Naive thymus-derived CD4-positive, alpha-beta T cell (primary cell): ENCODE measurements at regions of chr6 and their contacts with region 1.

Region 1: DNA sequence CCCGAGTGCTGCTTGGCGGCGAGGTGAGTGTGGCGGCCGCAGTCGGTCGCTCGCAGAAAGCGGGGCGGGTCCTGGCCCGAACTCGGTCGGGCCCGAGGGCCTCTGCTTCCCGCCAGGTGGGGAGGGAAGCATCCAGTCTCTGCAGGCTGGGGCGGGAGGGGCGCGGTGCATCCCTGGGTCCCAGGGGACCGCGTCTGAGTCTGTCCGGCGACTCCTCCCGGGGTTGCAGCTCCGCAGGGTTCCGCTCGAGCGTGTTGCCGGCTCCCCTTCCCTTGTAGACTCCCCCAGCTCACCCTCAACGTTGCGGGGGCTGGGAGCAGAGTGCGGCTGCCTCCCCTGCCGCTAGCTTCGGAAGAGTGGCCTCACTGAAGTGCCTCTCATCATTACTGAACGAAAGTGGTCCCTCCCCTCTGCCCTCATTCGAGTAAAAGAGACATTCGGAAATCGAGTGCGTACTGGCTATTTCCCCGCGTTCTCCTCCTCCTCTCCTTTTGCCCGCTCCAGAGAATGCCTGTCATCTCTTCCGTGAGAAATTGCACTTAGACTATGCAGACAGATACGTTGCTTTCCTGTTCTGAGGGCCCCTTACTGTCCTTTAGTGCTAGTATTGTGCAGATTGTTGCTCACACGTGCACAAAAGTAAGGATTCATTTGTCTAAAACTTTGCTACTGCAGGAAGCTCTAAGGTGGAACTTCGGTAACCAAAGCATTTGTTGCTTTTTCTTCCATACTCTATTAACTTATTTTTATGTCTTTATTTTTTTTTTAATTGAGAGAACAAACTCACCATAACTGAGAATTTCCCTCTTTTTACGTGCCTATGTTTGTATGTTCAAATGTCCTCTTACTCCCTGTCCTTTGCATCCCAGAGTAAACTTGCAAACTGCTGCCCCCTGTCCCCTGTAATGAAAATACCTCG is 751 bp downstream of the MAP3K4 start:
- DNase-seq: peak in 7 of 9 donors; percentile 17 to 65 (median 47)
- ATAC-seq: peak; percentile 63
- H3K4me3 ChIP-seq: peak overlapping the region; percentile 94
- H3K4me3 Mint-ChIP-seq: peak overlapping the region; percentile 90 to 99 (median 93)
- H3K27ac ChIP-seq: peak overlapping the region; percentile 76
- H3K27ac Mint-ChIP-seq: peak overlapping the region; percentile 83 to 97 (median 93)
- H3K4me1 ChIP-seq: peaks cover 9 to 14% of the 10 kb centered on the region in 2 donors
- H3K4me1 Mint-ChIP-seq: peaks cover 19 to 60% (median 45%) of the 10 kb centered on the region in 7 donors
- H3K27me3 ChIP-seq: no peaks in the 10 kb centered on the region
- H3K27me3 Mint-ChIP-seq: peaks cover 0 to 30% (median 0%) of the 10 kb centered on the region in 5 donors

Region 2: DNA sequence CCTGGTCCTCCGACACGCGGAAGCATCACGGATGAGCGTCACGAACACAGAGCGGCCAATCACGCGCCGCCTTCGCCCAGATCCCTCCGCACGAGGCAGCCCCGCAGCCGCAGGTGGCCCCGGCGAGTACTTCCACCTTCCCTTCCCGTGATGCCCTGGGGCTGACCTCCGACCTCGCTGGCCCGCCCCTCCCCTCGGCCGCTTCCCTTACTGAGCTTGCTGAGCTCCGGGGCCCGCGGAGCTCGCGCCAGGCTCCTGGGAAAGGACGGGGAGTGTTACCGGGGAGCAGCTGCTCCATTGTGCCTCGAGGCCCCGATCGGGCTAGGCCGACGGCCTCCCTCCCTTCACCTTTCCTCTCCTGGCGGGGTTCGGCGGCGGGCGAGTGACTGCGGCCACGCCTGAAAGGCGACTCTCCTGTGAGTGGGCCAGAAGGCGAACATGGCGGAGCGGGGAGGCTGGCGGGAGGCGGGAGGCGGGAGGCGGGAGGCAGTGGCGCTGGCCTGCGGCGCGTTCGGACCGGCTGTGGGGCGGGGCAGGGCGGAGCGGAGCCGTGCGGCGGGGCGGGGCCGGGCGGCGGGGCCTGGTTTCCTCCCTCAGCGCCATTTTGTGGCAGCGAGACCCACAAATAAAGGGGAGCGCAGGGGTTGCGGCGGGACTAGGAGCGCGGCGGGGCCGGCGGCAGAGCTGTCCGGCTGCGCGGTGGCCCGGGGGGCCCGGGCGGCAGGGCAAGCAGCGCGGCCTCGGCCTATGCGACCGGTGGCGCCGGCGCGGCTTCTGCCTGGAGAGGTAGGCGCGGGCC is 1265.2 kb before region 1 on chr6 and contains the start of gene WTAP:
- CTCF ChIA-PET with region 1: no interaction called
- POLR2A ChIA-PET with region 1: no interaction called
- intact Hi-C with region 1: loop called in 1 of 2 experiments (anchors 2 kb)
- DNase-seq: peak; percentile 83 to 97 (median 97)
- ATAC-seq: peak; percentile 93
- H3K4me3 ChIP-seq: peak within 1 kb of the TSS; percentile 89
- H3K4me3 Mint-ChIP-seq: peak within 1 kb of the TSS; percentile 87 to 97 (median 95)
- H3K27ac ChIP-seq: peak within 1 kb of the TSS; percentile 91
- H3K27ac Mint-ChIP-seq: peak within 1 kb of the TSS; percentile 95 to 100 (median 99)
- H3K4me1 ChIP-seq: peaks cover 33 to 34% of the 10 kb centered on the region in 2 donors
- H3K4me1 Mint-ChIP-seq: peaks cover 34 to 79% (median 67%) of the 10 kb centered on the region in 7 donors
- H3K27me3 ChIP-seq: no peaks in the 10 kb centered on the region
- H3K27me3 Mint-ChIP-seq: peaks cover 0 to 6% (median 0%) of the 10 kb centered on the region in 5 donors
- total RNA-seq, gene WTAP: 117 to 152 (median 141) TPM

Region 3: DNA sequence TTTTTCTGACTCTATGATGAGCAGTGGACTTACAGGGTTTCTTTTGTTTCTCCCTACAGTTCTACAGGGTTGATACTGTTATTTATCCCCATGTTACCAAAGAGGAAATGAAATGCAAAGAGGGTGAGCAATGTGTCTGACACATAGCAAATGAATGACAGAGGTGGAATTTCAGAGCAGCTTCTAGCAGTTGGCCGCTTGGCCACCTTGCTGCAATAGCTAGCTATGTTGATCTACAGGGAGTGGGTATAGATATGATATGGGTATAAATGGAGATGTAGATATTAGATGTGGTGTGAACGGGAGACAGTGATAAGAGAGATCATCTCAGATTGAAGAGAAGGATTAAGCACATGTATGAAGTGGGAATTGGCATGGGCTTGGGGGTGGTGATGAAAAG is 655.0 kb before region 1 on chr6:
- CTCF ChIA-PET with region 1: no interaction called
- POLR2A ChIA-PET with region 1: no interaction called
- intact Hi-C with region 1: no loop called
- DNase-seq: no peak
- ATAC-seq: no peak
- H3K4me3 ChIP-seq: no peak overlapping the region
- H3K4me3 Mint-ChIP-seq: no peak overlapping the region
- H3K27ac ChIP-seq: no peak overlapping the region
- H3K27ac Mint-ChIP-seq: no peak overlapping the region
- H3K4me1 ChIP-seq: no peaks in the 10 kb centered on the region
- H3K4me1 Mint-ChIP-seq: peaks cover 0 to 3% (median 0%) of the 10 kb centered on the region in 7 donors
- H3K27me3 ChIP-seq: no peaks in the 10 kb centered on the region
- H3K27me3 Mint-ChIP-seq: peaks cover 9 to 40% (median 32%) of the 10 kb centered on the region in 5 donors

Region 4: DNA sequence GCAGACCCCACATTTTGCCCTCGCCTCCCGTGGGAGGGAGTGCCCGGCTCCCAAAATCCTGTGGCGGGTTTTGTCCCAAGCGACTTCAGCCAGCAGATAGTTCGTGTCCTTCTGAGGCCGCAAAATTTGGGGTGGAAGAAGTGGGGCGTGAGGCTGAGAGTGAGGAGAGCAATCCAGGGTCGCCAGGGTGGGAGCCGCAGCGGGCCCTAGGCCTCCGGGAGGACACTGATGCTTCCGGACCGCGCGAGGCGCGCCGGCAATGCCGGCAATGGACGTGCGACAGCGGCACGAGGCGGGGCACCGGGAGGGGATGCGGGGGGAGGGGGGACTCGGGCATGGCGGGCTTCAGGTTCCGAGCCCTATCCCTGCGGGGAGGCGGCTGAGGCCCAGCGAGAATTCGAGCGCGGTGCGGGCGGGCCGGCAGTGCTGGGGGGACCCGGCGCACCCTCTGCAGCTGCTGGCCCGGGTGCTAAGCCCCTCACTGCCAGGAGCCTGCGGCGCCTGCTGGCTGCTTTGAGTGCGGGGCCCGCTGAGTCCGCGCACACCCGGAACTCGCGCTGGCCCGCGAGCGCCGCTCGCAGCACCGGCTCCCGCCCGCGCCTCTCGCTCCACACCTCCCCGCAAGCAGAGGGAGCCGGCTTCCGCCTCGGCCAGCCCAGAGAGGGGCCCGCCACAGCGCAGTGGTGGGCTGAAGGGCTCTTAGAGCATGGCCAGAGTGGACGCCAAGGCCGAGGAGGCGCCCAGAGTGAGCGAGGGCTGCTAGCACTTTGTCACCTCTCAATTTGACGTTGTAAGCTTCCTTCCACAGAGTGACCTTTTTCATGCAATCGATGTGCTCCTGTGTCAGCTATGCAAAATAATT is 472.0 kb before region 1 on chr6:
- CTCF ChIA-PET with region 1: no interaction called
- POLR2A ChIA-PET with region 1: no interaction called
- intact Hi-C with region 1: loop called in 1 of 2 experiments (anchors 5 kb)
- DNase-seq: peak; percentile 47 to 81 (median 69)
- ATAC-seq: peak; percentile 82
- H3K4me3 ChIP-seq: peak overlapping the region; percentile 75
- H3K4me3 Mint-ChIP-seq: peak overlapping the region; percentile 91 to 97 (median 95)
- H3K27ac ChIP-seq: peak overlapping the region; percentile 70
- H3K27ac Mint-ChIP-seq: peak overlapping the region; percentile 81 to 96 (median 87)
- H3K4me1 ChIP-seq: peaks cover 0 to 14% of the 10 kb centered on the region in 2 donors
- H3K4me1 Mint-ChIP-seq: peaks cover 13 to 32% (median 24%) of the 10 kb centered on the region in 7 donors
- H3K27me3 ChIP-seq: no peaks in the 10 kb centered on the region
- H3K27me3 Mint-ChIP-seq: peaks cover 0 to 59% (median 0%) of the 10 kb centered on the region in 5 donors

Region 5: GRCh38 chr6:160871320-160871719 is 121.0 kb before region 1 on chr6:
- CTCF ChIA-PET with region 1: no interaction called
- POLR2A ChIA-PET with region 1: no interaction called
- intact Hi-C with region 1: no loop called
- DNase-seq: no peak
- ATAC-seq: no peak
- H3K4me3 ChIP-seq: no peak overlapping the region
- H3K4me3 Mint-ChIP-seq: no peak overlapping the region
- H3K27ac ChIP-seq: no peak overlapping the region
- H3K27ac Mint-ChIP-seq: no peak overlapping the region
- H3K4me1 ChIP-seq: no peaks in the 10 kb centered on the region
- H3K4me1 Mint-ChIP-seq: no peaks in the 10 kb centered on the region
- H3K27me3 ChIP-seq: no peaks in the 10 kb centered on the region
- H3K27me3 Mint-ChIP-seq: peaks cover 0 to 27% (median 8%) of the 10 kb centered on the region in 5 donors

Region 6: GRCh38 chr6:161009991-161010390 is 17.7 kb after region 1 on chr6:
- CTCF ChIA-PET with region 1: interaction called, 3 read pairs
- POLR2A ChIA-PET with region 1: no interaction called
- intact Hi-C with region 1: loop called in 1 of 2 experiments (anchors 2 kb)
- DNase-seq: no peak
- ATAC-seq: no peak
- H3K4me3 ChIP-seq: no peak overlapping the region
- H3K4me3 Mint-ChIP-seq: no peak overlapping the region
- H3K27ac ChIP-seq: no peak overlapping the region
- H3K27ac Mint-ChIP-seq: no peak overlapping the region
- H3K4me1 ChIP-seq: peaks cover 0 to 3% of the 10 kb centered on the region in 2 donors
- H3K4me1 Mint-ChIP-seq: peaks cover 2 to 89% (median 75%) of the 10 kb centered on the region in 7 donors
- H3K27me3 ChIP-seq: no peaks in the 10 kb centered on the region
- H3K27me3 Mint-ChIP-seq: no peaks in the 10 kb centered on the region

Region 7: GRCh38 chr6:161021998-161022743 is 29.9 kb after region 1 on chr6:
- CTCF ChIA-PET with region 1: no interaction called
- POLR2A ChIA-PET with region 1: no interaction called
- intact Hi-C with region 1: no loop called
- DNase-seq: no peak
- ATAC-seq: no peak
- H3K4me3 ChIP-seq: no peak overlapping the region
- H3K4me3 Mint-ChIP-seq: no peak overlapping the region
- H3K27ac ChIP-seq: no peak overlapping the region
- H3K27ac Mint-ChIP-seq: no peak overlapping the region
- H3K4me1 ChIP-seq: no peaks in the 10 kb centered on the region
- H3K4me1 Mint-ChIP-seq: peaks cover 0 to 65% (median 51%) of the 10 kb centered on the region in 7 donors
- H3K27me3 ChIP-seq: no peaks in the 10 kb centered on the region
- H3K27me3 Mint-ChIP-seq: no peaks in the 10 kb centered on the region

Region 8: GRCh38 chr6:161228921-161229591 is 236.7 kb after region 1 on chr6:
- CTCF ChIA-PET with region 1: no interaction called
- POLR2A ChIA-PET with region 1: no interaction called
- intact Hi-C with region 1: loop called in 1 of 2 experiments (anchors 5 kb)
- DNase-seq: no peak
- ATAC-seq: peak; percentile 40
- H3K4me3 ChIP-seq: no peak overlapping the region
- H3K4me3 Mint-ChIP-seq: peak overlapping the region in 1 of 10 donors; percentile 76
- H3K27ac ChIP-seq: no peak overlapping the region
- H3K27ac Mint-ChIP-seq: peak overlapping the region in 1 of 9 donors; percentile 90
- H3K4me1 ChIP-seq: peaks cover 0 to 16% of the 10 kb centered on the region in 2 donors
- H3K4me1 Mint-ChIP-seq: peaks cover 9 to 56% (median 25%) of the 10 kb centered on the region in 7 donors
- H3K27me3 ChIP-seq: no peaks in the 10 kb centered on the region
- H3K27me3 Mint-ChIP-seq: no peaks in the 10 kb centered on the region

Region 9: GRCh38 chr6:161922631-161923119 is 930.4 kb after region 1 on chr6:
- CTCF ChIA-PET with region 1: no interaction called
- POLR2A ChIA-PET with region 1: no interaction called
- intact Hi-C with region 1: no loop called
- DNase-seq: peak in 1 of 9 donors; percentile 24
- ATAC-seq: no peak
- H3K4me3 ChIP-seq: no peak overlapping the region
- H3K4me3 Mint-ChIP-seq: no peak overlapping the region
- H3K27ac ChIP-seq: no peak overlapping the region
- H3K27ac Mint-ChIP-seq: no peak overlapping the region
- H3K4me1 ChIP-seq: no peaks in the 10 kb centered on the region
- H3K4me1 Mint-ChIP-seq: no peaks in the 10 kb centered on the region
- H3K27me3 ChIP-seq: no peaks in the 10 kb centered on the region
- H3K27me3 Mint-ChIP-seq: no peaks in the 10 kb centered on the region

Region 10: GRCh38 chr6:162727309-162728182 is 1735.2 kb after region 1 on chr6 and contains the starts of genes PACRG and PRKN:
- CTCF ChIA-PET with region 1: no interaction called
- POLR2A ChIA-PET with region 1: no interaction called
- intact Hi-C with region 1: loop called (anchors 1 to 10 kb)
- DNase-seq: peak; percentile 97 to 99 (median 97)
- ATAC-seq: peak; percentile 95
- H3K4me3 ChIP-seq: peak within 1 kb of the TSS; percentile 72
- H3K4me3 Mint-ChIP-seq: peak within 1 kb of the TSS; percentile 92 to 98 (median 96)
- H3K27ac ChIP-seq: peak within 1 kb of the TSS; percentile 90
- H3K27ac Mint-ChIP-seq: peak within 1 kb of the TSS; percentile 88 to 99 (median 97)
- H3K4me1 ChIP-seq: no peaks in the 10 kb centered on the region
- H3K4me1 Mint-ChIP-seq: peaks cover 6 to 20% (median 14%) of the 10 kb centered on the region in 7 donors
- H3K27me3 ChIP-seq: no peaks in the 10 kb centered on the region
- H3K27me3 Mint-ChIP-seq: peaks cover 0 to 13% (median 0%) of the 10 kb centered on the region in 5 donors
- total RNA-seq, gene PACRG: 0.89 to 1.7 (median 1.4) TPM in 4 of 5 experiments, not detected in the other
- total RNA-seq, gene PRKN: 0.44 to 9.0 (median 8.1) TPM